H1 (cell line): ENCODE measurements at regions of chr2 and their contacts with region 1.

Region 1: GRCh38 chr2:217650716-217651360 is 352.0 kb downstream of the TNS1 start:
- DNase-seq: peak; percentile 51 to 54
- H3K4me3 ChIP-seq: peak overlapping the region in 1 of 4 experiments; percentile 35; a peak in 2 of 8 replicates
- H3K27ac ChIP-seq: no peak overlapping the region
- H3K4me1 ChIP-seq: peaks cover 0 to 5% (median under 1%) of the 10 kb centered on the region in 4 experiments; a peak in 2 of 7 replicates
- H3K27me3 ChIP-seq: peaks cover 0 to 2% (median 0%) of the 10 kb centered on the region in 4 experiments; a peak in 1 of 7 replicates
- CTCF ChIP-seq: peak; percentile 47 to 94 (median 77)
- EP300 ChIP-seq: no peak
- POLR2A ChIP-seq: no peak
- RAD21 ChIP-seq: peak; percentile 73 to 79

Region 2: DNA sequence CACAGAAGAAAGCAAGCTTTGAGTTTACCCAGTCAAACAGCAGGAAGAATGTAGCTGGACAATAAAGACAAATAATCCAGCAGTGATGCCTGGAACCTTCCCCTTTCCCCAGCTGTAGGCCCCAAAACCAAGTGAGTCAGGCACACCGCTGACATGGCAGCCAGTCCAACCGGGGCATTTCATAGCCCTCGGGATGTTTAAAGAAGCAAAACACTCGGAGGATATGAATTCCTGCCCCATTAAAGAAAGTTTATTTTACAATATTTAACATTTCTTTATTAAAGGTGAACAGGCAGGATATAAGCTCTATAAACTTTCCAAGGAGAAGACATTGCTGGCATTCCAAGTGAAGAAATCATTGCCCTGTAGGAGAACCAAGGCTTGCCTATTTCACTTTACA is 283.4 kb before region 1 on chr2:
- CTCF ChIA-PET with region 1: no interaction called
- POLR2A ChIA-PET with region 1: no interaction called
- DNase-seq: no peak
- H3K4me3 ChIP-seq: no peak overlapping the region
- H3K27ac ChIP-seq: no peak overlapping the region
- H3K4me1 ChIP-seq: peaks cover 0 to 6% (median 0%) of the 10 kb centered on the region in 4 experiments; a peak in 3 of 7 replicates
- H3K27me3 ChIP-seq: peaks cover 5 to 22% (median 16%) of the 10 kb centered on the region in 4 experiments; a peak in 4 of 7 replicates
- CTCF ChIP-seq: no peak
- EP300 ChIP-seq: no peak
- POLR2A ChIP-seq: no peak
- RAD21 ChIP-seq: no peak

Region 3: DNA sequence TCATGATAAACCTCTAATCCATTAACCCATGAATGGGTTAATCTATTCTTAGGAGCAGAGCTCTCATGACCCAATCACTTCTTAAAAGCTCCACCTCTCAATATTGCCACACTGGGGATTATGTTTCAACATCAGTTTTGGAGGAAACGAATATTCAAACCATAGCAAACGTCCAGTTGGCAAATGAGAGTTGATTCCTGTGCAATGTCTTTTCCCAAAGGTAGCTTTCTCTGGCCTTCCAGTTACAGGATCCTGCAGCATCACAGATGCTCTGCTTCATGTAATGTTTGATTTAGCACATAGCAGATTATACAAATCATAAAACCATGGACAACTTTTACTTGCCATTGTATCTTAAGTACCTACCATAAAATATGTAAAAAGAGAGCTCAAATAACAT is 129.0 kb before region 1 on chr2:
- CTCF ChIA-PET with region 1: interaction called, 10 read pairs
- POLR2A ChIA-PET with region 1: no interaction called
- DNase-seq: no peak
- H3K4me3 ChIP-seq: no peak overlapping the region
- H3K27ac ChIP-seq: no peak overlapping the region
- H3K4me1 ChIP-seq: no peaks in the 10 kb centered on the region
- H3K27me3 ChIP-seq: no peaks in the 10 kb centered on the region
- CTCF ChIP-seq: no peak
- EP300 ChIP-seq: no peak
- POLR2A ChIP-seq: no peak
- RAD21 ChIP-seq: no peak

Region 4: GRCh38 chr2:217632043-217632442 is 18.8 kb before region 1 on chr2:
- CTCF ChIA-PET with region 1: interaction called, 12 read pairs
- POLR2A ChIA-PET with region 1: no interaction called
- DNase-seq: no peak
- H3K4me3 ChIP-seq: no peak overlapping the region
- H3K27ac ChIP-seq: no peak overlapping the region
- H3K4me1 ChIP-seq: no peaks in the 10 kb centered on the region
- H3K27me3 ChIP-seq: peaks cover 0 to 1% (median 0%) of the 10 kb centered on the region in 4 experiments; a peak in 2 of 7 replicates
- CTCF ChIP-seq: no peak
- EP300 ChIP-seq: no peak
- POLR2A ChIP-seq: no peak
- RAD21 ChIP-seq: no peak

Region 5: GRCh38 chr2:217666338-217666737 is 15.5 kb after region 1 on chr2:
- CTCF ChIA-PET with region 1: interaction called, 32 read pairs
- POLR2A ChIA-PET with region 1: no interaction called
- DNase-seq: no peak
- H3K4me3 ChIP-seq: no peak overlapping the region
- H3K27ac ChIP-seq: no peak overlapping the region
- H3K4me1 ChIP-seq: no peaks in the 10 kb centered on the region
- H3K27me3 ChIP-seq: no peaks in the 10 kb centered on the region
- CTCF ChIP-seq: no peak
- EP300 ChIP-seq: no peak
- POLR2A ChIP-seq: no peak
- RAD21 ChIP-seq: no peak

Region 6: DNA sequence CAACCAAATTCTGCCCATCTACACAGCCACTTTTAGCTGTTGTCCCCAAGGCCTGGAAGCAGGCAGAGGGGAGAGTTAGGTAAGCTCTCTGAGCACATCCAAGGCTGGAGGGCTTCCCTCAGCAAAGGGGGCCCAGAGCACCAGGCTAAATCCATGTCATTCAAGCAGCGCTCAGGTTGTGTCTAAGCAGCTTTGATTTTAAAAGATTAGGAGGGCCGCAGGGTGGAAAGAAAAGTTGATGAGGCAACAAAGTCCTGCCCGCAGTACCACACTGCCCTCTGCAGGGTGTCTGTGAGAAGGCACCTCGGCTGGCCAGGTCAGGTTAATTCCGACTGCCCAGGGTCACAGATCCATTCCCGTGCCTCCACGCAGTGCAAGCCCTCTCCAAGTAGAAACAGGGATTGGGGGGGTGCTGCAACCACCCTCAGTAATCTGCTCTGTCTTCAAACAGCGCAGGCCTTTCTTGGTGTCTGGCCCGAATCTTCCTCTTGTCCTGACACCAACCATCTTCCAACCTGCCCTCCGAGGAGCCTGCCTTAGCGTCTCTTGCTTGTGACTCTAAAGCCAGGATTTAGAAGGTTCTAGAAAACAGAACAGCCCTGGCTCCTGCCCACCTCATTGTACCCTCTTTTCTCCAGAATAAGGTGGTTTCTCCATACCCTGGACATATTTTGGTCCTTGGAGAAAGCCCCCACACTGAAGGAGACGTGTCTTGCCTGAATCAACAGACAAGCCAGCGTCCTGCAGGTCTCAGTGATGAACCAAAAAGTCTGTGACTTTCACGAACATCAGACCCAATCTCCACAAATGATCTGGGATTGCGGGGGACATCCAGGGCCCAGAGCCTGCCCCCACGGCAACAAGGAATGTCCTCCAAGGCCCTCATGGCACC is 62.8 kb after region 1 on chr2:
- CTCF ChIA-PET with region 1: interaction called, 91 read pairs
- POLR2A ChIA-PET with region 1: no interaction called
- DNase-seq: peak; percentile 62 to 97
- H3K4me3 ChIP-seq: no peak overlapping the region
- H3K27ac ChIP-seq: no peak overlapping the region
- H3K4me1 ChIP-seq: 0 out of 7 replicates have a peak, but pooled peaks cover 0 to 1% (median 0%) of the 10 kb centered on the region in 4 experiments
- H3K27me3 ChIP-seq: 0 out of 7 replicates have a peak, but pooled peaks cover 0 to 3% (median 0%) of the 10 kb centered on the region in 4 experiments
- CTCF ChIP-seq: peak; percentile 93 to 97 (median 96)
- EP300 ChIP-seq: no peak
- POLR2A ChIP-seq: no peak
- RAD21 ChIP-seq: peak; percentile 99